Breast epithelium (tissue), 4 donors: ENCODE measurements at regions of chr1 and their contacts with region 1.

Region 1: GRCh38 chr1:204477036-204477740 is 17.4 kb downstream of the PIK3C2B start:
- DNase-seq: no peak
- H3K4me3 ChIP-seq: no peak overlapping the region
- H3K27ac ChIP-seq: peak overlapping the region; percentile 81 to 85
- H3K4me1 ChIP-seq: peaks cover 14 to 28% of the 10 kb centered on the region in 2 donors
- H3K27me3 ChIP-seq: no peaks in the 10 kb centered on the region
- CTCF ChIP-seq: no peak
- POLR2A ChIP-seq: no peak

Region 2: GRCh38 chr1:203000226-203000944 is 1476.8 kb before region 1 on chr1:
- intact Hi-C with region 1: loop called (anchors 5 kb)
- DNase-seq: no peak
- H3K4me3 ChIP-seq: no peak overlapping the region
- H3K27ac ChIP-seq: no peak overlapping the region
- H3K4me1 ChIP-seq: no peaks in the 10 kb centered on the region
- H3K27me3 ChIP-seq: no peaks in the 10 kb centered on the region
- CTCF ChIP-seq: no peak
- POLR2A ChIP-seq: no peak

Region 3: DNA sequence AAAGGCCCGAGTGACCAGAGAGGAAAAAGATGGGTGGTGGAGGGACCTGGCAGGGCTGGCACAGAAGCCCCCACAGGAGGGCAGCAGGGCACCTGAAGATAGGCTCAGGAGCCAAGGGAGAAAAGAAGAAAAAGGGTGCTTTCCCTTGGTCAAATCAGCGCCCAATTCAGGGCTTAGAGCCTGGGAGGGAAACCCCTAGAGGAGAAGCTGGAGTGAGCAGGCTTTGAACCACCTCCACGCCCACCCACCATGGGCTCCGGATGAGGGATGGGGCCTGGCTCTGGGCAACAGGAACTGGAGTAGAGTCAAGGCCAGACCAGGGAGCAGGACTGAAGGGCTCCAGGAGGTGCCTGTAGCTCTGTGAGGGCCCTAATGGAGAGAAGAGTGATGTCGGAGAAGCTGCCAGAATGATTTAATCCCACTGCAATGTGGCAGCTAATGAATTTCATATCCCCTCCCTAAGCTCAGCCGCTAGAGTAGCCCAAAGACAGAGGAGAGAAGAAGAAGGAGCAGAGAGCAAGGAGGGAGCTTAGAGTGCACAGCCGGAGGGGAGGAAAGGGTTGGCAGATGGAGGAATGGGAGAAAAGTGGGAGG is 1013.6 kb before region 1 on chr1:
- intact Hi-C with region 1: no loop called
- DNase-seq: no peak
- H3K4me3 ChIP-seq: peak overlapping the region in 1 of 3 donors; percentile 3
- H3K27ac ChIP-seq: peak overlapping the region; percentile 89 to 90
- H3K4me1 ChIP-seq: peaks cover 16 to 37% of the 10 kb centered on the region in 2 donors
- H3K27me3 ChIP-seq: no peaks in the 10 kb centered on the region
- CTCF ChIP-seq: peak in 1 of 3 donors; percentile 18
- POLR2A ChIP-seq: no peak

Region 4: DNA sequence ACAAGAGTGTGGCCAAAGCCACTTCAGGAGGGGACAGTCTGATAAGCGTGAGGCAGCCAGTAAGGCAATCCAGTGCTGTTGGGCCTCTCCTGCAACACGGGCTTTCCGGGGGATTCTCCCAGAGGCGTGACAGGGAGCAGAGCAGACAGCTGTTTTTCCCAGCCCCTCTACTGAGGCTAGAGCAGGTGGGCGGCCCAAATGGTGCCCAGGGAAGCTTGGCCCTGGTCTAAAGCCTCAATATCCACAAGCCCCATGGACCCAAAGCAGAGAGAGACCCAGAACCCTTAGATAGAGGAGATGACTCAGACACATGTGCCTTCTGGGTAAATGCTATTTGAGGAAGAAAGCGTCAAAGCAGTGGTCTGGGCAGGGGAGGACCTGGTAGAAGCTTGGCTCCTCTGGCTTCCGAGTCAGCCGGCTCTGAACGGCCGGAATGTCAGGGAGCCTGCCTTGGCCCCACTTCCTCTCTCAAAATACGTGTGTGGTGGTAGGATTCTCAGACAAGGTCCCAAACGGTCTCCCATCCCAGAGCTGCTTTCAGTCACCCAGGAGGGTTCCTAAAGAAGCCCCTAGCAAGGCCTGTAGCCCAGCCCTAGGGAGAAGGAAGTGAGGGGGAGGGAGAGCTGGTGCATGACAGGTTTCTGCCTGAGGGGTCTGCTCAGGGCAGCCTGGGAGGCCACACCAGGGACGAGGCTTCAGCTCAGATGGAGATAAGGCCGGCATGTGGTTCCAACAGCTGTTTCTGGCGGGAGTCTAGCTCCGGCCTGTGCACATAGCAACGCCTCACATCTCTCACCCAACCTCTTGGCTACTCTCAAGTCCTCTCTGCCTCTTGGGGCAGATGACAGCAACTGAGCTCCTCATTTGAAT is 11.4 kb before region 1 on chr1:
- intact Hi-C with region 1: no loop called
- DNase-seq: no peak
- H3K4me3 ChIP-seq: peak overlapping the region in 1 of 3 donors; percentile 6
- H3K27ac ChIP-seq: peak overlapping the region; percentile 79 to 83
- H3K4me1 ChIP-seq: peaks cover 4 to 10% of the 10 kb centered on the region in 2 donors
- H3K27me3 ChIP-seq: no peaks in the 10 kb centered on the region
- CTCF ChIP-seq: no peak
- POLR2A ChIP-seq: no peak